ENCODE measurements at regions of chr1 and their contacts with region 1.

Region 1: DNA sequence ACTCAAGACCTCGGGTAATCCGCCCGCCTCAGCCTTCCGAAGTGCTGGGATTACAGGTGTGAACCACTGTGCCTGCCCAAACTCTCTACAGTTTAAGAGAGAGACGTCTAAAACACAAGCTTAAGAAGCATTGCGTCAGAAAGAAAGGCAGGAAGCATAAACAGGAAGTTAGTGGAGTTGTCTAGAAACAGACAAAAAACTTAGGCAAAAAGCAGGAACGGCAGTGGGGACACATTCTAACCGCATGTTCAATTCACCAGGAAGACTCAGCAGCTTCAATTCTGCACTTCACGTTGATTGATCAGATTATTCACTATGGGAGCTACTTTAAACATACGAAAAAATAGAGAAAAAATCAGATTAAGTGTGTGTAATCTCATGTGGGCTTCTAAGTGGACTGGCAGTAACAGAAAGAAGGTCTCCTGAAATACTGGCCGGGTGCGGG is 7.4 kb downstream of the CFAP74 start:
- DNase-seq: no peak
- H3K4me3 Mint-ChIP-seq: no peak overlapping the region
- H3K27ac Mint-ChIP-seq: peak overlapping the region; percentile 36
- H3K4me1 Mint-ChIP-seq: peaks cover 6% of the 10 kb centered on the region
- H3K27me3 Mint-ChIP-seq: peaks cover 12% of the 10 kb centered on the region

Region 2: GRCh38 chr1:2019172-2019543 is 22.9 kb after region 1 on chr1 and contains the start of gene GABRD:
- intact Hi-C with region 1: loop called (anchors 2 kb)
- DNase-seq: no peak
- H3K4me3 Mint-ChIP-seq: no peak within 1 kb of the TSS
- H3K27ac Mint-ChIP-seq: peak within 1 kb of the TSS; percentile 40
- H3K4me1 Mint-ChIP-seq: no peaks in the 10 kb centered on the region
- H3K27me3 Mint-ChIP-seq: peaks cover 38% of the 10 kb centered on the region
- total RNA-seq, gene GABRD: 0.26 TPM in 1 of 2 replicates, not detected in the other

Region 3: GRCh38 chr1:2049718-2050427 is 53.6 kb after region 1 on chr1 and contains the start of gene PRKCZ:
- intact Hi-C with region 1: no loop called
- DNase-seq: peak; percentile 75
- H3K4me3 Mint-ChIP-seq: peak within 1 kb of the TSS; percentile 69
- H3K27ac Mint-ChIP-seq: no peak within 1 kb of the TSS
- H3K4me1 Mint-ChIP-seq: peaks cover 8% of the 10 kb centered on the region
- H3K27me3 Mint-ChIP-seq: peaks cover 48% of the 10 kb centered on the region
- total RNA-seq, gene PRKCZ: 4.1 TPM in 2 replicates